Activated CD8-positive, alpha-beta T cell treated with anti-CD3 and anti-CD28 coated beads for 36 hours (primary cell): ENCODE measurements at regions of chr2 and their contacts with region 1.

Region 1: DNA sequence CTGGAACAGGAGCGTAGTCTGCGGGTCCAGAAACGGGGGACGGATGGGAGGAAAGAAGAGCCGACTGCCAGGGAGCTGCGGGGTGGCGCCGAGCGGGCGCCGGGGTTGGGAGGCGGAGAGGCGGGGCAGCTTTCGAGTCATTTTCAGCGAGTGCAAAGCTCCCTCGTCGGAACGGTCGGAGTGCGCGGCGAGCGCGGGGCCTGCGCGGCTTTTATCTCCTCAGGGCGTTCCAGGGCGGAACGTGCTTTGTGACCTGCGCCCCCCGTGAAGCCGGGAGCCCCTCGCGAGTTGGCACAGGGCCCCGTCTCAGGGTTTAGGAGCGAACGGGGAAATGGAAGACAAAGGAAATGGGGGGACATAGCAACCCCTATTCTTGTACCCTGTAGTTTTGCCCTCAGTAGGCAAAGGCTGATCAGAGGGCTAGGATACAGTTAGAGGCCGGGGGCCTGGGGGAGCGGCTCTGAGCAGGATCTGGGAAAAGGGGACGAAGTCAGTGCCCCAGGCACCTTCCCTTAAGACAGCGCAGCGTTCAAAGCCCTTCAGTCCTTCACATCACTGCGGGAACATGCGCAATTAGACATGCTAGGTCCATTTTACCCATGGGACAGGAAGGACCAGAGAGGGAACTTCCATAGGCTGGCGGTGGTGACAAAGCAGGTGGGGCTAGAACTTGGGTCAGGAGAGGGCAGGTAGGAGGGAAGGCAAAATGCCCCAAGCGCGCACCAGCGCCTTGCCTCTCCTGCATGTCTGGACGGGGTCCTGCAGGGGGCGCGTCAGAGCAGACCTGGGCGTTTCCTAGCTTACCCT is 60.1 kb upstream of the IL1RL1 start:
- DNase-seq: peak; percentile 75
- ATAC-seq: peak; percentile 70
- H3K4me3 Mint-ChIP-seq: peak overlapping the region; percentile 74
- H3K27ac Mint-ChIP-seq: peak overlapping the region; percentile 86
- H3K4me1 Mint-ChIP-seq: peaks cover 39% of the 10 kb centered on the region
- H3K27me3 Mint-ChIP-seq: peaks cover 7% of the 10 kb centered on the region
- CTCF ChIP-seq: peak; percentile 86

Region 2: DNA sequence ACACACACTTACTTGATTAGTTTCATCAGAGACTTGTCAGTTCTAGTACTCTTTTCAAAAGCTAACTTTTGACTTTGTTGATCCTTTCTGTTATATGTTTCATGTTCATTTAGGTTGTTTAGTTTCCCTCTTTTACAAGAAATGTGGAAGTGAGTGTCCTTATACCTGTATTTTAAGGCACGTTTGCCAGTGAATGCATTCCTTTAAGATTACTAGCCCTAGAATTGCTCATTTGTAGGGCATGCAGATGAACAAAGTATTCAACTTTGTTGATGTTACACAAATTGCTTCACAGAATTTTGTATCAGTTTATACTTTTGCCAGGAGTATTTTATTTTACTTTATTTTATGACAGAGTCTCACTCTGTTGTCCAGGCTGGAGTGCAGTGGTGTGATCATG is 58.2 kb before region 1 on chr2:
- CTCF ChIA-PET with region 1: no interaction called
- POLR2A ChIA-PET with region 1: no interaction called
- intact Hi-C with region 1: no loop called
- DNase-seq: no peak
- ATAC-seq: no peak
- H3K4me3 Mint-ChIP-seq: no peak overlapping the region
- H3K27ac Mint-ChIP-seq: no peak overlapping the region
- H3K4me1 Mint-ChIP-seq: peaks cover 4% of the 10 kb centered on the region
- H3K27me3 Mint-ChIP-seq: peaks cover 10% of the 10 kb centered on the region
- CTCF ChIP-seq: no peak

Region 3: DNA sequence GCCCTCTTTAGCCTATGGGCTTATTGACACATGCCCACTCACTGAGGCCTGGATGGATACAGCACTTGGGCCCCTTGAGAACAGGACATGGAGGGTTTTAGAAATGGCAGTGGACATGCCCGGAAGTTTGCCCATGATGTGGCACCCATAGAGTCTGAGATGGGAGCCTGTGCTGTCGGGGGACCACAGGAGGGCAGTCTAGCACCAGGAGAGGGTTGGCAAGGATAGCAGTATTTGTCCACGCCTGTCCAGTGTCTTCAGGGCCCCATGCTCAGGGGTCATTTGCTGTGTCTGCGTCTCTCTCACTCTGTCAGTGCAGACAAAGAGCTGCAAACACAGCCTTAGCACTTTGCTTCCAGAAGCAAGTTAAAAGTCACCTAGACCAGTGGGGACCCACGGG is 15.8 kb before region 1 on chr2:
- CTCF ChIA-PET with region 1: interaction called, 41 read pairs
- POLR2A ChIA-PET with region 1: no interaction called
- intact Hi-C with region 1: no loop called
- DNase-seq: peak; percentile 46
- ATAC-seq: no peak
- H3K4me3 Mint-ChIP-seq: no peak overlapping the region
- H3K27ac Mint-ChIP-seq: no peak overlapping the region
- H3K4me1 Mint-ChIP-seq: peaks cover 49% of the 10 kb centered on the region
- H3K27me3 Mint-ChIP-seq: no peaks in the 10 kb centered on the region
- CTCF ChIP-seq: peak; percentile 20

Region 4: DNA sequence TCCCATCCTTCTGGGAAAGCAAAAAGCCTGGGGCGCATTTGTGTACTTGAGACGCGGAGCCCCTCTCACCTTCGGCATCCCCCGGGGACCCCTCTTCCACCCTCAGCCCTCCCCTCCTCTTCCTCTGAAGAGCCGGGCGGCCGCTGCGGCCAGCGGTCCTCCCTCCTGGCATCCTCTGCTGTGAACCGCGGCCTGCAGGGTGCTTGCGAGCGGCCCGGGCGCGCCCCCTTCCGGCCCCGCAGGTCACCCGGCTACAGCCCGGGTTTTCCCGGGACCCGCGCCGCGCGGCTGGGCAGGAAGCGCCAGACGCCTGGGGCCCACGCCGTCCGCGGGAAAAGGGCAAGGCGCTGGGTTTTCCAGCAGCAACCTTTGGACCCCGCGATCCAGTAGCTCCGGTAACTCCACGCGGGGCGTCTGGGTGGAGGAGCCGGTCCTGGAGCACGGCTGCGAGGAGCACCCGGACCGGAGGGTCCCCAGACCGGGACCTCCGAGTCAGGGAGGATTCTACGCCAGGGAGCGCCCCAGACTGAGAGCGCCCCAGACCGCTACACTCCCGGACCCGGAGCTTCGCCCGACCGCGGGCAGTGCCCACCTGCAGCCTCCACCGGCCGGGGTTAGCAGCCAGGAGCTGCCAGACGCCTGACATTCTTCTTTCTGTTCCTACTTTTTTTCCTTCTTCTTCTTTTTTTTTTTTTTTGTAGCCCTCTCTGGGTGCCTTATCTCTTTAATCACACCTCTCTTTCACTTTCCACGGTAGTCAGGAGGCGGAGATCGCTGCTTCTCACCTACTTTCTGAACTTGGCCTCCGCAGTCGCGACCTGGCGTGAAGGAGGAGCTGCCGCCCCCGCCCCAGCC is 104.5 kb after region 1 on chr2 and contains the start of gene IL18R1:
- CTCF ChIA-PET with region 1: interaction called, 13 read pairs
- POLR2A ChIA-PET with region 1: no interaction called
- intact Hi-C with region 1: loop called (anchors 2 kb)
- DNase-seq: peak; percentile 81
- ATAC-seq: peak; percentile 82
- H3K4me3 Mint-ChIP-seq: peak within 1 kb of the TSS; percentile 96
- H3K27ac Mint-ChIP-seq: peak within 1 kb of the TSS; percentile 98
- H3K4me1 Mint-ChIP-seq: peaks cover 36% of the 10 kb centered on the region
- H3K27me3 Mint-ChIP-seq: no peaks in the 10 kb centered on the region
- CTCF ChIP-seq: peak; percentile 84
- total RNA-seq, gene IL18R1: 15.0 to 15.8 TPM